ENCODE measurements at regions of chr3 and their contacts with region 1.

Region 1: GRCh38 chr3:71859123-71859519 is 74.2 kb upstream of the PROK2 start:
- DNase-seq: peak; percentile 24
- H3K4me3 Mint-ChIP-seq: no peak overlapping the region
- H3K27ac Mint-ChIP-seq: no peak overlapping the region
- H3K4me1 Mint-ChIP-seq: no peaks in the 10 kb centered on the region
- H3K27me3 Mint-ChIP-seq: peaks cover 38% of the 10 kb centered on the region
- CTCF ChIP-seq: no peak

Region 2: GRCh38 chr3:71710906-71711494 is 148.1 kb before region 1 on chr3:
- CTCF ChIA-PET with region 1: interaction called, 5 read pairs
- intact Hi-C with region 1: loop called (anchors 1 kb)
- DNase-seq: no peak
- H3K4me3 Mint-ChIP-seq: no peak overlapping the region
- H3K27ac Mint-ChIP-seq: no peak overlapping the region
- H3K4me1 Mint-ChIP-seq: peaks cover 26% of the 10 kb centered on the region
- H3K27me3 Mint-ChIP-seq: no peaks in the 10 kb centered on the region
- CTCF ChIP-seq: no peak

Region 3: DNA sequence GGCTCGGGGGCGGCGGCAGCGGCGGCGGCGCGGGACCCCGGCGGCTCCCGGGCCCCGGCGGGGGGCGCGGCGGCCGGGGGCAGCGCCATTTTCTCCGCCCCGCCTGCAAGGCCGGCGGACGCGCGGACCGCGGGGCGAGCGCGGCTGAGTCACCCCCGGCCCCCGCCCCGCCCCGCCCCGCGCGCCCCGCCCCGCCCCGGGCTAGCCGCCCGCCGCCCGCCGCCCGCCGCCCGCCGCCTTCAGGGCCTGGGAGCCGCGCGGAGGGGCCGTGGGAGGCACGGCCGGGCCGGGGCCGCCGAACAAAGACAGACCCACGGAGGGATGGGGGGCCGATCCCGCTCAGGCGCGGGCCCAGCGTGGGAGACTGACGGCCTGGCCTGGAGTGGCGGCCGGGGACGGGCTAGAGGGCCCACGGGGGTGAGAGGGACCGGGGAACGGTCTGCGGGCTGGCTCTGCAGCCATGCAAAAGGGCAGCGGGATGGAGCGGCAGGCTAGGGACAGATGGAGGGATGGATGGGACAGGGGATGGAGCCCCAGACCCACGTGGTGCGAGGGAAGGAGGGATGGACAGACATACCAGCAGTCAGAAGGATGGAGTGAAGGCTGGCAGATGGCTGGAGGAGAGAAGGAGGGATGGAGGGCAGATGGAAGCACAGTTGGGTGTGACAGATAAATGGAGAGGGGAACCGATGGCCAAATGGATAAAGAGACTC is 133.7 kb before region 1 on chr3 and contains the start of gene EIF4E3:
- CTCF ChIA-PET with region 1: interaction called, 15 read pairs
- intact Hi-C with region 1: loop called (anchors 1 kb)
- DNase-seq: peak; percentile 26
- H3K4me3 Mint-ChIP-seq: peak within 1 kb of the TSS; percentile 76
- H3K27ac Mint-ChIP-seq: peak within 1 kb of the TSS; percentile 59
- H3K4me1 Mint-ChIP-seq: no peaks in the 10 kb centered on the region
- H3K27me3 Mint-ChIP-seq: peaks cover 18% of the 10 kb centered on the region
- CTCF ChIP-seq: no peak
- total RNA-seq, gene EIF4E3: 8.7 and 10.9 TPM in 2 replicates